ENCODE measurements at regions of chr1 and their contacts with region 1.

Region 1: GRCh38 chr1:239898062-239898730 is 193.5 kb upstream of the FMN2 start:
- DNase-seq: peak; percentile 73 to 84 (median 75)
- H3K4me3 ChIP-seq: peak overlapping the region; percentile 4
- H3K27ac ChIP-seq: peak overlapping the region in 1 of 2 donors; percentile 24
- H3K4me1 ChIP-seq: peaks cover 3% of the 10 kb centered on the region
- H3K27me3 ChIP-seq: no peaks in the 10 kb centered on the region
- CTCF ChIP-seq: peak; percentile 89 to 93 (median 91)
- EP300 ChIP-seq: no peak
- POLR2A ChIP-seq: no peak

Region 2: GRCh38 chr1:239413916-239414315 is 484.3 kb before region 1 on chr1:
- intact Hi-C with region 1: loop called in 1 of 4 experiments (anchors 10 kb)
- DNase-seq: no peak
- H3K4me3 ChIP-seq: no peak overlapping the region
- H3K27ac ChIP-seq: no peak overlapping the region
- H3K4me1 ChIP-seq: peaks cover 3% of the 10 kb centered on the region
- H3K27me3 ChIP-seq: no peaks in the 10 kb centered on the region
- CTCF ChIP-seq: no peak
- EP300 ChIP-seq: no peak
- POLR2A ChIP-seq: no peak

Region 3: GRCh38 chr1:239930686-239931262 is 32.6 kb after region 1 on chr1:
- intact Hi-C with region 1: no loop called
- DNase-seq: no peak
- H3K4me3 ChIP-seq: no peak overlapping the region
- H3K27ac ChIP-seq: no peak overlapping the region
- H3K4me1 ChIP-seq: no peaks in the 10 kb centered on the region
- H3K27me3 ChIP-seq: no peaks in the 10 kb centered on the region
- CTCF ChIP-seq: no peak
- EP300 ChIP-seq: no peak
- POLR2A ChIP-seq: no peak